ENCODE measurements at regions of chr7 and their contacts with region 1.

Region 1: GRCh38 chr7:128455551-128456254 is at the start of gene HILPDA:
- DNase-seq: peak; percentile 99
- H3K4me3 ChIP-seq: peak within 1 kb of the TSS; percentile 89 to 99
- H3K27ac ChIP-seq: peak within 1 kb of the TSS; percentile 81 to 91
- H3K4me1 ChIP-seq: peaks cover 25 to 38% of the 10 kb centered on the region in 2 experiments; a peak in 3 of 4 replicates
- H3K27me3 ChIP-seq: no peaks in the 10 kb centered on the region
- CTCF ChIP-seq: no peak
- EP300 ChIP-seq: peak in 1 of 2 experiments; percentile 20; a peak in 1 of 4 replicates
- RAD21 ChIP-seq: no peak
- polyA plus RNA-seq, gene HILPDA: 24.0 and 29.1 TPM in 2 replicates

Region 2: GRCh38 chr7:128221929-128222403 is 233.7 kb before region 1 on chr7:
- CTCF ChIA-PET with region 1: no interaction called
- POLR2A ChIA-PET with region 1: no interaction called
- DNase-seq: peak; percentile 69
- H3K4me3 ChIP-seq: no peak overlapping the region
- H3K27ac ChIP-seq: peak overlapping the region in 1 of 2 experiments; percentile 35; a peak in 2 of 4 replicates
- H3K4me1 ChIP-seq: peaks cover 3 to 19% of the 10 kb centered on the region in 2 experiments; a peak in 2 of 4 replicates
- H3K27me3 ChIP-seq: no peaks in the 10 kb centered on the region
- CTCF ChIP-seq: no peak
- EP300 ChIP-seq: peak; percentile 41 to 72; a peak in 2 of 4 replicates
- RAD21 ChIP-seq: no peak

Region 3: DNA sequence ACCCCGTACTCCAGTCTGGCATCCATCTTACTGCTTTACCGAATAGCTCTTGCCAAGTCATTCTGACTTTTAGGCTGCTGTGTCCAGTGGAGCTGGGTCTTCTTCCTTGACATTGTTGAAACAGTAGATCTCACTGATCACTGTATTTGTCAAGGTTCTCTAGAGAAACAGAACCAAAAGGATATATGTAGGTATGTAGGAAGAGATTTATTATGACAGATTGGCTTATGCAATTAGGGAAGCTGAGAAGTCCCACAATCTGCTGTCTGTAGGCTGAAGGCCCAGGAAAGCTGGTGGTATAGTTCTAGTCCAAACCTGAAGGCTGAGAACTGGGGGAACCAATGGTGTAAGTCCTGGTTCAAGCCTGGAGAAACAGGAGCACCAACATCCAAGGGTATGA is 82.1 kb before region 1 on chr7:
- CTCF ChIA-PET with region 1: interaction called, 12 read pairs
- POLR2A ChIA-PET with region 1: no interaction called
- DNase-seq: peak; percentile 2
- H3K4me3 ChIP-seq: no peak overlapping the region
- H3K27ac ChIP-seq: no peak overlapping the region
- H3K4me1 ChIP-seq: peaks cover 0 to 2% of the 10 kb centered on the region in 2 experiments; a peak in 1 of 4 replicates
- H3K27me3 ChIP-seq: peaks cover 13% of the 10 kb centered on the region; the same call in 1 of the 2 replicates
- CTCF ChIP-seq: no peak
- EP300 ChIP-seq: no peak
- RAD21 ChIP-seq: no peak

Region 4: DNA sequence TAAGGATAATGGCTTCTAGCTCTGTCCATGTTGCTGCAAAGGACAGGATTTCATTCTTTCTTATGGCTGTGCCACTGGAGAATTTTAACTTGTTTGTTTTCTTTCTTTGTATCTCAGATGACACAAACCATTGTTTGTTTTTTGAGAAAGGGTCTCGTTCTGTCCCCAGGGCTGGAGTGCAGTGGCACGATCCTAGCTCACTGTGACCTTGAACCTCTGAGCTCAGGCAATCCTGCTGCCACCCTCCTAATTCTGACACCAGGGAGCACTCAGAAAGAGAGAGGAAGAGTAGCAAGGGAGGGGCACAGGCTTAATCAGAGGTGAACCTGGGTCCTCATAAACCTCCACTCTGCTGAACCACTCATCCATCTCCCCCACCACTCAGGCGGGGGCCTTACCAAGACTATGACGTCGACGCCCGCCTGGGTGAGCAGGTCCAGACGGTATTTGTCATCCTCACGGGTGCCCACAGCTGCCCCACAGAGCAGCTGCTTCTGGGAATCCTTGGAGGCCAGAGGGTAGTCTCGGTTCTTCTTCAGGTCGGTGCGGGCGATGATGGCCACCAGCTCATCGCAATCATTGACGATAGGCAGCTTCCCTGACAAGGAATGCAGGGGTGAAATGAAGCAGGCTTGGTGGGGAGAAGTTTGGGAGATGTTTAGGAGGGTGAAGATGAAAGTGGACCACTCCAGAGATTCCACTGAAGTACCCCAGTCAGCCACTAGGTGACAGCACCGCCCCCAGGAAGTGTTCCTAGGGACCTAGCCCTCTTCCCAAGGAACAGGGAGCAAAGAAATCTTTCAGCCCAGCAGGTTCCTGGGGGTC is 57.5 kb before region 1 on chr7:
- CTCF ChIA-PET with region 1: interaction called, 95 read pairs
- POLR2A ChIA-PET with region 1: no interaction called
- DNase-seq: peak; percentile 90
- H3K4me3 ChIP-seq: no peak overlapping the region; a peak in 1 of 4 replicates
- H3K27ac ChIP-seq: no peak overlapping the region
- H3K4me1 ChIP-seq: no peaks in the 10 kb centered on the region
- H3K27me3 ChIP-seq: no peaks in the 10 kb centered on the region
- CTCF ChIP-seq: peak; percentile 99
- EP300 ChIP-seq: no peak
- RAD21 ChIP-seq: peak; percentile 90

Region 5: GRCh38 chr7:128415217-128415785 is 40.4 kb before region 1 on chr7:
- CTCF ChIA-PET with region 1: interaction called, 67 read pairs
- POLR2A ChIA-PET with region 1: interaction called, 3 read pairs
- DNase-seq: peak; percentile 75
- H3K4me3 ChIP-seq: no peak overlapping the region
- H3K27ac ChIP-seq: no peak overlapping the region
- H3K4me1 ChIP-seq: peaks cover 0 to 5% of the 10 kb centered on the region in 2 experiments; a peak in 1 of 4 replicates
- H3K27me3 ChIP-seq: no peaks in the 10 kb centered on the region
- CTCF ChIP-seq: no peak
- EP300 ChIP-seq: peak in 1 of 2 experiments; percentile 71; a peak in 2 of 4 replicates
- RAD21 ChIP-seq: no peak

Region 6: DNA sequence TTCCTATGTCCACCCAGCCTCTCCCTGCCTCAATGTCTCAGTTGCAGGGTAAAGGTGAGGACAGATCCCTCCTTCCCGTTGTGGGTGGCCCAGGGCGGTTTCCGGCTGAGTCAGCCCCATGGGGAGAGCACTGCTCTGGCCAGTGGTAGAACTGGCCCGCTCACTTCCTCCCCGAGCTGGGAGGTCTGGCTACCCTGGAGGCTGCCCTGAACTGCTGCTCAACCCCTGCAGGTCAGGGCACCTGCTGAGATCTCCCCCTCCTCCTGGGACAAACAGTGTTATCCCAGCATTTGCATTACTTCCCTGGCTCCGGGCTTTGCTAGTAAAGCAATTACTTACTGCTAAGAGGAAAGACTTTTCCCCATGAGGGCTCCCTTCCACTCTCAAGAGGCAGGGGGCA is 24.5 kb before region 1 on chr7:
- CTCF ChIA-PET with region 1: interaction called, 418 read pairs
- POLR2A ChIA-PET with region 1: interaction called, 7 read pairs
- DNase-seq: no peak
- H3K4me3 ChIP-seq: no peak overlapping the region
- H3K27ac ChIP-seq: no peak overlapping the region
- H3K4me1 ChIP-seq: 0 out of 4 replicates have a peak, but pooled peaks cover 0 to 7% of the 10 kb centered on the region in 2 experiments
- H3K27me3 ChIP-seq: no peaks in the 10 kb centered on the region
- CTCF ChIP-seq: no peak
- EP300 ChIP-seq: no peak
- RAD21 ChIP-seq: no peak

Region 7: DNA sequence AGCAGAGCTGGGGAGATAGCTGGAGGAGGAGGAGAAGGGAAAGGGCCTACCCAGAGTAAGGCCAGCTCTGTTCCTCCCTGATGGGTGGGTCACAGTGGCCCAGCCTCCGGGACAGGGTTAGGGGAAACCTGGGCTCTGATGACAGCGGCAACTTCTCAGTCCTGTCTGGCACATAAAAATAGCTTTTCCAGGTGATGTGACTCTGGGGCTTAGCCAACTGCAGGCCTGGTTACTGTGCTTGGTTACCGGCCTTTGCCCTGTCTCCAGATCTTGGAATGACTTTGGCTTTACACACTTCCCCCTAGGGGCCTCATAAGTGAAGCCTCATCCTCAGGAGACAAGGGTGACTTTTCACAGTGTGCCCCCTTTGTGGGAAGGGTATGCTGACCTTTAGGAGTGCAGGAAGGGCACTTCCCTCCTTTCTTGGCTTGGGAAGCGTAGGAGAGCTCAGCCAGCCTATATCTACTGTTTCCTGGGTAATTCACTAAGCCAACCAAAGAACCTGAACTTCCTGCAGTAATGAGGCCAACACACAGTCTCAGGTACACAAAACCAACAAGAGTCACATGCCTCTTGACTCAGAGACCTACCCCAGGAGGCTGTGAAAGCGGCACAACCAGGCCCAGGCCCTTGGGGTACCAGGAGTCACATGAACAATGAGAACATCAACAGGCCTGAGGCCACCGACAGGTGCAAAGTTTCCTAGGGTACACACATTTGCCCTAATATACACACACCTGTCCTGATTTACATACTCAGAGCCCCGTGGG is 11.7 kb before region 1 on chr7:
- CTCF ChIA-PET with region 1: interaction called, 92 read pairs
- POLR2A ChIA-PET with region 1: interaction called, 9 read pairs
- DNase-seq: no peak
- H3K4me3 ChIP-seq: no peak overlapping the region
- H3K27ac ChIP-seq: no peak overlapping the region
- H3K4me1 ChIP-seq: peaks cover 0 to 18% of the 10 kb centered on the region in 2 experiments; a peak in 1 of 4 replicates
- H3K27me3 ChIP-seq: no peaks in the 10 kb centered on the region
- CTCF ChIP-seq: no peak
- EP300 ChIP-seq: no peak
- RAD21 ChIP-seq: no peak